Activated CD4-positive, alpha-beta memory T cell treated with anti-CD3 and anti-CD28 coated beads for 36 hours (primary cell): ENCODE measurements at regions of chr3 and their contacts with region 1.

Region 1: GRCh38 chr3:68876112-68876713 is 56.1 kb downstream of the TAFA4 start:
- DNase-seq: peak; percentile 23
- H3K4me3 Mint-ChIP-seq: no peak overlapping the region
- H3K27ac Mint-ChIP-seq: no peak overlapping the region
- H3K4me1 Mint-ChIP-seq: no peaks in the 10 kb centered on the region
- H3K27me3 Mint-ChIP-seq: peaks cover 9% of the 10 kb centered on the region

Region 2: DNA sequence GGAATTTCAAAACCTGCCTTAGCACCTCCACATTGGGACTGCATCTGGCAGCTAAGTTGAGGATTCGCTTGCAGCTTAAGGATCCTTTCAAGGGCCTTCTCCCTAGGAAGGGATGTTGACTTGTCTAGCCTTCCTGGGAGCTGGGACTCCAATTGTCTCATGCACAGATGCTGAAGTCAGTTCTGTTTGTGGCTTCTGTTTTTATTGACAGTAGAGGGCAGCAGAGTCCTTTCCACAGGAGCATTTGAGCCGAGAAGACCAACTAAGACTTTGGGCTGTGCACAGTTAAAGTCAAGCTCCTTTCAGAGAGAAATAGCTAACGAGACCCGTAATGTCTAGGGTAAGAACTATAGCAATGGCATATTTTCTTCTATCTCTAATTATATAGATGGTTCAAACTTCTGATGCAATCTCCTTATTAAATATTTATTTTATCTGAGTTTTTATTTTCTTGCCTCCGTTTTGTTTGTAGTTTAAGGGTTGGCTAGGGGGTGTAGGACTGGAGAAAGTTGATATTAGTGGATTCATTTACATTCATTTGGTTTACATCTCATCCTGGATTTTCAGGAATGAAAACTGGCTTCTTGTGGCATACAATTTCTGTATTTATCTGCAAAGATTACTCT is 1937.8 kb before region 1 on chr3:
- CTCF ChIA-PET with region 1: interaction called, 32 read pairs
- POLR2A ChIA-PET with region 1: no interaction called
- intact Hi-C with region 1: loop called (anchors 5 kb)
- DNase-seq: peak; percentile 29
- H3K4me3 Mint-ChIP-seq: no peak overlapping the region
- H3K27ac Mint-ChIP-seq: no peak overlapping the region
- H3K4me1 Mint-ChIP-seq: no peaks in the 10 kb centered on the region
- H3K27me3 Mint-ChIP-seq: peaks cover 6% of the 10 kb centered on the region

Region 3: GRCh38 chr3:67384760-67385397 is 1491.3 kb before region 1 on chr3:
- CTCF ChIA-PET with region 1: interaction called, 24 read pairs
- POLR2A ChIA-PET with region 1: no interaction called
- intact Hi-C with region 1: no loop called
- DNase-seq: peak; percentile 61
- H3K4me3 Mint-ChIP-seq: no peak overlapping the region
- H3K27ac Mint-ChIP-seq: no peak overlapping the region
- H3K4me1 Mint-ChIP-seq: peaks cover 20% of the 10 kb centered on the region
- H3K27me3 Mint-ChIP-seq: no peaks in the 10 kb centered on the region

Region 4: GRCh38 chr3:67821135-67821534 is 1055.1 kb before region 1 on chr3:
- CTCF ChIA-PET with region 1: interaction called, 3 read pairs
- POLR2A ChIA-PET with region 1: no interaction called
- intact Hi-C with region 1: loop called (anchors 10 kb)
- DNase-seq: no peak
- H3K4me3 Mint-ChIP-seq: no peak overlapping the region
- H3K27ac Mint-ChIP-seq: no peak overlapping the region
- H3K4me1 Mint-ChIP-seq: no peaks in the 10 kb centered on the region
- H3K27me3 Mint-ChIP-seq: no peaks in the 10 kb centered on the region

Region 5: GRCh38 chr3:68893600-68894239 is 17.5 kb after region 1 on chr3:
- CTCF ChIA-PET with region 1: interaction called, 18 read pairs
- POLR2A ChIA-PET with region 1: no interaction called
- intact Hi-C with region 1: no loop called
- DNase-seq: no peak
- H3K4me3 Mint-ChIP-seq: no peak overlapping the region
- H3K27ac Mint-ChIP-seq: no peak overlapping the region
- H3K4me1 Mint-ChIP-seq: no peaks in the 10 kb centered on the region
- H3K27me3 Mint-ChIP-seq: peaks cover 4% of the 10 kb centered on the region